Panc1 (cell line): ENCODE measurements at regions of chr16 and their contacts with region 1.

Region 1: GRCh38 chr16:84186685-84187437 is at the start of gene TAF1C:
- DNase-seq: peak; percentile 69
- ATAC-seq: peak; percentile 96
- H3K4me3 ChIP-seq: peak within 1 kb of the TSS; percentile 85 to 97
- H3K27ac ChIP-seq: peak within 1 kb of the TSS; percentile 86
- H3K4me1 ChIP-seq: no peaks in the 10 kb centered on the region
- H3K27me3 ChIP-seq: no peaks in the 10 kb centered on the region
- CTCF ChIP-seq: peak; percentile 95
- total RNA-seq, gene TAF1C: 31.9 TPM

Region 2: DNA sequence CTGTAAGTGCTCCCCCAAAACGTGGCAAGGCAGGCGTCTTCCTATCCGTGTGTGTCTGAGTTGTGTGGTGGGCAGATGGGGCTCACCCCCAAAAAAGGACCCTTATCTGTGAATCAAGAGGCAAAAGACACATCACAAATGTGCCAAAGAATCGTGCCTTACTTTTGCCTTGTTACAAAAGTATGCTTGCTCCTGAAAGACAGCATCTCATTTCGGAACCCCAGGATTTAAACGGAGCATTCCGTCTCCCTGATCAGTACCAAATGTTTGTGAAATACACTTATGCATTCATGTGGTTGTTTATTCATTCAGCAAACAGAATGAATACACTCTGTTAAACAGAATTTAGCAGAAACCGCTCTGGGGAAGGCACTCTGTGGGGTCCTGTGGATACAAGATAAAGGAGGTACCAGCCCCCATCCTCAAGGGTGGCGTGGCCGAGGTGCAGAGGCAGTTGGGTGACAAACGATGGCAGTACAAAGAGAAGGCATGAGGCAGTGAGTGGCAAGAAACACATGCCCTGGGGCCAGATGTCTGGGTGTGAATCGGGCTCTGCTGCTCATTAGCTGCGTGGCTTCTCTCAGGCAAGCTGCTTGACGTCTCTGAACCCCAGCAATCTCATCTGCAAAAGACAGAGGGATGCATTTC is 108.5 kb after region 1 on chr16:
- CTCF ChIA-PET with region 1: no interaction called
- POLR2A ChIA-PET with region 1: no interaction called
- in situ Hi-C with region 1: no loop called
- intact Hi-C with region 1: no loop called
- DNase-seq: no peak
- ATAC-seq: no peak
- H3K4me3 ChIP-seq: peak overlapping the region in 1 of 2 experiments; percentile 24; a peak in 1 of 4 replicates
- H3K27ac ChIP-seq: no peak overlapping the region
- H3K4me1 ChIP-seq: no peaks in the 10 kb centered on the region
- H3K27me3 ChIP-seq: no peaks in the 10 kb centered on the region
- CTCF ChIP-seq: no peak

Region 3: GRCh38 chr16:84308120-84308519 is 121.3 kb after region 1 on chr16:
- CTCF ChIA-PET with region 1: interaction called, 11 read pairs
- POLR2A ChIA-PET with region 1: no interaction called
- in situ Hi-C with region 1: no loop called
- intact Hi-C with region 1: loop called (anchors 5 kb)
- DNase-seq: no peak
- ATAC-seq: peak; percentile 92
- H3K4me3 ChIP-seq: no peak overlapping the region
- H3K27ac ChIP-seq: no peak overlapping the region
- H3K4me1 ChIP-seq: no peaks in the 10 kb centered on the region
- H3K27me3 ChIP-seq: no peaks in the 10 kb centered on the region; the same call in 1 of the 2 replicates
- CTCF ChIP-seq: peak; percentile 75; the same call in 1 of the 2 replicates

Region 4: DNA sequence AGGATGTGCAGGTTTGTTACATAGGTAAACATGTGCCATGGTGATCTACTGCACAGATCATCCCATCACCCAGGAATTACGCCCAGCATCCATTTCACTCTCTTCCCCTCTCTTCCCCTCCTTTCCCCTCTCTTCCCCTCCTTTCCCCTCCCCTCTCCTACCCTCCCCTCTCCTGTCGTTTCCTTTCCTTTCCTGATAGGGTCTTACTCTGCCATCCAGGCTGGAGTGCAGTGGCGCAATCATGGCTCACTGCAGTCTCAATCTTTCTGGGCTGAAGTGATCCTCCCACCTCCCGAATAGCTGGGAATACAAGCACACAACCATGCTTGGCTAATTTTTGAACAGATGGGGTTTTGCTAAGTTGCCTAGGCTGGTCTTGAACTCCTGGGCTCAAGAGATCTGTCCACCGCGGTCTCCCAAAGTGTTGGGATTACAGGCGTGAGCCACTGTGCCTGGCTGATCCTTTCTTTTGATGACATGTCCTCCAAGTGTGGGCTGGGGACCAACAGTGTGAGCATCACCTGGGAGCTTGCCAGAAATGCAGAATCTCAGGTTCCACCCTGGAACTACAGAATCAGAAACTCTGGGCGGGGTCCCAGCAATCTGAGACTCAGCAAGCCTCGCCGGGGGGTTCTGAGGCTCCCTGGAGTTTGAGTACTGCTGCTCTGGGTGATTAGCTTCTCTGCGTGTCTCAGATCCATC is 192.3 kb after region 1 on chr16:
- CTCF ChIA-PET with region 1: interaction called, 18 read pairs
- POLR2A ChIA-PET with region 1: no interaction called
- in situ Hi-C with region 1: no loop called
- intact Hi-C with region 1: no loop called
- DNase-seq: no peak
- ATAC-seq: no peak
- H3K4me3 ChIP-seq: no peak overlapping the region
- H3K27ac ChIP-seq: no peak overlapping the region
- H3K4me1 ChIP-seq: no peaks in the 10 kb centered on the region
- H3K27me3 ChIP-seq: no peaks in the 10 kb centered on the region
- CTCF ChIP-seq: no peak

Region 5: GRCh38 chr16:84484579-84485254 is 297.9 kb after region 1 on chr16:
- CTCF ChIA-PET with region 1: no interaction called
- POLR2A ChIA-PET with region 1: no interaction called
- in situ Hi-C with region 1: no loop called
- intact Hi-C with region 1: loop called (anchors 10 kb)
- DNase-seq: no peak
- ATAC-seq: peak; percentile 78
- H3K4me3 ChIP-seq: no peak overlapping the region
- H3K27ac ChIP-seq: no peak overlapping the region
- H3K4me1 ChIP-seq: no peaks in the 10 kb centered on the region
- H3K27me3 ChIP-seq: no peaks in the 10 kb centered on the region
- CTCF ChIP-seq: peak; percentile 75